ENCODE measurements at regions of chr16 and their contacts with region 1.

Region 1: GRCh38 chr16:68843482-68844210 is at the start of gene TANGO6:
- DNase-seq: peak; percentile 87
- H3K4me3 Mint-ChIP-seq: peak within 1 kb of the TSS; percentile 94
- H3K27ac Mint-ChIP-seq: peak within 1 kb of the TSS; percentile 94
- H3K4me1 Mint-ChIP-seq: peaks cover 24% of the 10 kb centered on the region
- H3K27me3 Mint-ChIP-seq: no peaks in the 10 kb centered on the region
- total RNA-seq, gene TANGO6: 34.1 and 35.5 TPM in 2 replicates

Region 2: GRCh38 chr16:68564367-68564985 is 279.2 kb before region 1 on chr16:
- intact Hi-C with region 1: no loop called
- DNase-seq: no peak
- H3K4me3 Mint-ChIP-seq: no peak overlapping the region
- H3K27ac Mint-ChIP-seq: no peak overlapping the region
- H3K4me1 Mint-ChIP-seq: no peaks in the 10 kb centered on the region
- H3K27me3 Mint-ChIP-seq: no peaks in the 10 kb centered on the region

Region 3: DNA sequence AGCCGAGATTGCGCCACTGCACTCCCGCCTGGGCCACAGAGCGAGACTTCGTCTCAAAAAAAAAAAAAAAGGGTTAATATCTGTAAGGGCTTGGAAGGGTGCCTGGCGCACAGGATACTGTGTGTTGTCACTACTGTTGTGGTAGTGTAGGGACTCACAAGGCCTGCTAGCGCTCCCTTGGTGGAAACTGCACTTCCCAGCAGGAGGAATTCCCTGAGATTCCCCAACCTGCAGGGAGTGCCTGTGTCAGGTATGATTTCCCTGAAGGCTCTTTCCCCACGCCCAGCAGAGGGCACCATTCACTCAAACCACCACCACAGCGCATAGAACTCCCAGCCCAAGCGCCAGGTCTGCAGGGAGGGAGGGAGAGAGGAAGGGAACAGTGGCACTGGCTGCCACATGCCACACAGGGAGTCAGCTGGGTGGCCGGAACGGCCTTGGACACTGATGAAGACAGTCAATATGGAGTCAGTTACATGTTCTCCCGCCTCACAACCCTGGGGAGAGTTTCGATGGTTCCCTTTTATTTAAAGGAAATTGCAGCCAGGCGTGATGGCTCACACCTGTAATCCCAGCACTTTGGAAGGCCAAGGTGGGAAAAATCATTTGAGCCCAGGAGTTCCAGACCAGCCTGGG is 139.3 kb before region 1 on chr16:
- intact Hi-C with region 1: loop called (anchors 1 kb)
- DNase-seq: peak; percentile 42
- H3K4me3 Mint-ChIP-seq: no peak overlapping the region
- H3K27ac Mint-ChIP-seq: no peak overlapping the region
- H3K4me1 Mint-ChIP-seq: peaks cover 5% of the 10 kb centered on the region
- H3K27me3 Mint-ChIP-seq: no peaks in the 10 kb centered on the region

Region 4: DNA sequence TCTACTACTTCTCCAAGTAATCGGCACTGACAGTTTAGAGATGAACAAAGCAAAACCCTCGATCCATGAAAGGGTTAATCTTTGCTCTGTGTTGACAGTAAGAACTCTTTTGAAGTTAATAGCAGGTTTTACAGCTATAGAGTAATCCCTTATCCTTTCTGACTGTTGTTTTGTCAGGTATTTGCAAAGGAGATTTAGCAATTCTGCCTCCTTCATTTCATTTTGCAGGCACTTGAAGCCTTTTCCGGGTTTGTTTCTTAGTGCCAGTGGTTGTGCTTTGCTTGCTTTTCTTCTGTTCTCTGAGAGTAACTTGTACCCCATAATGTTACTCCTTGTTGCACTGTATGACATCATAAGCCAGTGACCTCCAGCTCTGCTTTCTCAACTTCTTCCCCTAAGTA is 64.1 kb after region 1 on chr16:
- intact Hi-C with region 1: loop called (anchors 2 kb)
- DNase-seq: no peak
- H3K4me3 Mint-ChIP-seq: no peak overlapping the region
- H3K27ac Mint-ChIP-seq: no peak overlapping the region
- H3K4me1 Mint-ChIP-seq: no peaks in the 10 kb centered on the region
- H3K27me3 Mint-ChIP-seq: no peaks in the 10 kb centered on the region

Region 5: DNA sequence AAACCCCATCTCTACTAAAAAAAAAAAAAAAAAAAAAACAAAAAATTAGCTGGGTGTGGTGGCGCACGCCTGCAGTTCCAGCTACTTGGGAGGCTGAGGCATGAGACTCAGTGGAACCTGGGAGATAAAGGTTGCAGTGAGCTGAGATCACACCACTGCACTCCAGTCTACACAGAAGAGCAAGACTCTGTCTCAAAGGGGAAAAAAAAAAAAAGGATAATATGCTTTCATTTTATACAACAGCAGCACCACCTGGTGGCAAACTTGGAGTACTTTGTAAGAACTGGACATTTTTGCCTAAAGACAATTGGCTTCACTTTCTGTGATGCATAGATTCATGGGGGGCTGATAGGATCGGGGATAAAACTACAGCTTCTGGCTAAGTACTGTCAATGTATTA is 280.3 kb after region 1 on chr16:
- intact Hi-C with region 1: loop called (anchors 1 kb)
- DNase-seq: peak; percentile 50
- H3K4me3 Mint-ChIP-seq: no peak overlapping the region
- H3K27ac Mint-ChIP-seq: no peak overlapping the region
- H3K4me1 Mint-ChIP-seq: peaks cover 9% of the 10 kb centered on the region
- H3K27me3 Mint-ChIP-seq: no peaks in the 10 kb centered on the region

Region 6: DNA sequence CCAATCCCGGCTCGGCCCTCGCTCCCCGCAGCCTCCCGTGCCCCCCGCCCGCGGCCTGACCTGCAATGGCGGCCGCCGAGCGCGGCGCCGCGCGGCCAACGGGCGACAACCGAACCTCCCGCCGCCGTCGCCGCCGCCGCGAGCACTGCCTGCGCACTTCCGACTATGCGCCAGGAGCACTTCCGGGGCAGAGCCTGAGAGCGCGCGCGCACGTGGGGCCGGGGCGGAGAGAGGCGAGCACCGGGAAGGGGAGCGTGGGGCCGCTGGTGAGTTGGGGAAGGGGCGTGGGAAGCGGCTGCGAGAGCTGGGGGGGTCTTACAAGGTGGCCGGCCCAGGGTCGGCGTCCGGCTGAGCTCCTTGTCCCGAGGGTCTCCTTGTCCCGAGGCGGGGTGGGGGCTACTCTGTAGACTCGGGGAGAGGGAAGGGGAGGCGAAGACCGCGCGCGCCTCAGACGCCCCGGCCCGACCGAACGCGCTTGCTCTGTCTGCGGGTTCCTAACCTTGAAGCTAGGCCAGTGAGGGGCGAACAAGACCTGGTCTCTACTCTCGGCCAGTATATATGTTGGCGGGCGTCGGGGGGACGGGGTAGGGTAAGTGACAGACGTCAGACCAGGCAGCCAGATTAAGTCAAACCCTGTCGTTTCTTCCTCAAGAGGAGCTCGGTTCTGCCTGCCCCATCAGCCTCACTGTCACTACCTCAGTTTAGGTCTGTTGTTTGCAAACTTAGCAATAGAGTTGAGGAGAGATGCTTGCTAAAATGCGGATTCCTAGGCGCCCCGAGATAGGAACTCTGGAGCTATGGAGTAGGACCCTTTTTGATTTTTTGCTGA is 289.0 kb after region 1 on chr16 and contains the starts of genes CHTF8 and UTP4:
- intact Hi-C with region 1: loop called (anchors 1 kb)
- DNase-seq: peak; percentile 88
- H3K4me3 Mint-ChIP-seq: peak within 1 kb of the TSS; percentile 97
- H3K27ac Mint-ChIP-seq: peak within 1 kb of the TSS; percentile 92
- H3K4me1 Mint-ChIP-seq: peaks cover 49% of the 10 kb centered on the region
- H3K27me3 Mint-ChIP-seq: no peaks in the 10 kb centered on the region
- total RNA-seq, gene CHTF8: 134 and 143 TPM in 2 replicates
- total RNA-seq, gene UTP4: 117 and 127 TPM in 2 replicates

Measured in activated T-helper 1 cell treated with anti-CD3 and anti-CD28 coated beads, Interleukin-12 subunit alpha, Interleukin-12 subunit beta, Interleukin-2, Interleukin-4 antibody, amounts not matched to agents 30 ng/mL and 10 ng/mL and 1 ng/mL, durations not matched to agents 14 hours and 24 hours and 36 hours (primary cell).